H1 (cell line): ENCODE measurements at regions of chr6 and their contacts with region 1.

Region 1: GRCh38 chr6:131116749-131117360 is 18.4 kb upstream of the AKAP7 start:
- DNase-seq: no peak
- H3K4me3 ChIP-seq: no peak overlapping the region
- H3K27ac ChIP-seq: no peak overlapping the region
- H3K4me1 ChIP-seq: no peaks in the 10 kb centered on the region
- H3K27me3 ChIP-seq: no peaks in the 10 kb centered on the region
- CTCF ChIP-seq: peak in 2 of 3 experiments; percentile 28 to 43; a peak in 2 of 4 replicates
- EP300 ChIP-seq: no peak
- POLR2A ChIP-seq: no peak
- RAD21 ChIP-seq: peak; percentile 69 to 75

Region 2: GRCh38 chr6:130885392-130886192 is 231.3 kb before region 1 on chr6:
- CTCF ChIA-PET with region 1: interaction called, 56 read pairs
- POLR2A ChIA-PET with region 1: no interaction called
- DNase-seq: peak in 1 of 2 experiments; percentile 78
- H3K4me3 ChIP-seq: no peak overlapping the region
- H3K27ac ChIP-seq: no peak overlapping the region
- H3K4me1 ChIP-seq: no peaks in the 10 kb centered on the region
- H3K27me3 ChIP-seq: no peaks in the 10 kb centered on the region
- CTCF ChIP-seq: peak in 2 of 3 experiments; percentile 83 to 86; a peak in 3 of 4 replicates
- EP300 ChIP-seq: no peak
- POLR2A ChIP-seq: no peak
- RAD21 ChIP-seq: peak; percentile 98 to 100

Region 3: DNA sequence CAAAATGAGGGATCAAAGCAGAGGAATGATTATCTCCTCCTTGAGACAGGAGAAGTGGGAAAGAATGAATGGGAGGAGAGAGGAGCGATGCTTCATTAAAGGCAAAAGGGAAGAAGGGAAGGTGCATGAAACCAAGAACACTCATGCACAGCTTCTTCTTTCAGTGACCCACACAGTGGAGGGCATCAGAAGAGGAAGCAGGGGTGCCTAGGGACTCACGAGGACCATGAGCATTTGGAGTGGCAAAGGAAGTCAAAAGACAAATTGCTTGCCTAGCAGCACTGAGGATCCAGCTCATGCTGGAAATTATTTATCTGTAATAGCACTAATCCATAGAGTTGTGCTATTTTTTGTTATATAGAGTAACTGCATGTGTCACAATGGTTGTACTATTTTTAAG is 223.6 kb before region 1 on chr6:
- CTCF ChIA-PET with region 1: interaction called, 11 read pairs
- POLR2A ChIA-PET with region 1: no interaction called
- DNase-seq: no peak
- H3K4me3 ChIP-seq: no peak overlapping the region
- H3K27ac ChIP-seq: no peak overlapping the region
- H3K4me1 ChIP-seq: no peaks in the 10 kb centered on the region
- H3K27me3 ChIP-seq: no peaks in the 10 kb centered on the region
- CTCF ChIP-seq: no peak
- EP300 ChIP-seq: no peak
- POLR2A ChIP-seq: no peak
- RAD21 ChIP-seq: no peak

Region 4: DNA sequence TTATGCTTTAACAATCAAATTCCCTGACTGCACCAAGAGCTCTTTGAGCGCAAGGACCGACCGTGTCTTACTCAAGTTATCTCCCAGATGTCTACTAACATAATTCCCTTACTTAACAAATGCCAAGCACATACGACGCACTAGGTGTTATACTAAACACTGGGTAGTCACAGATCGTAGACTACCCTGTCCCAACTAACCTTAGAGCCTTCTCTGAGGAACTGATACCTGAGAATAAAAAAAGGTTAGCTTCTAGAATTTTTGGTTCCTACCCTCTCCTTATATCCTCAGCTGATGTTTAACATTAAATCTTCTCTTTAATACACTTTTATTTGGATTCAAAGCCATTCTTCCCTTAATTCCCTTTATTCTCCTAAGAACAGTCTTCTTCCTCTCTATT is 92.3 kb before region 1 on chr6:
- CTCF ChIA-PET with region 1: no interaction called
- POLR2A ChIA-PET with region 1: no interaction called
- DNase-seq: no peak
- H3K4me3 ChIP-seq: no peak overlapping the region
- H3K27ac ChIP-seq: no peak overlapping the region
- H3K4me1 ChIP-seq: no peaks in the 10 kb centered on the region
- H3K27me3 ChIP-seq: no peaks in the 10 kb centered on the region
- CTCF ChIP-seq: no peak
- EP300 ChIP-seq: no peak
- POLR2A ChIP-seq: no peak
- RAD21 ChIP-seq: no peak